ENCODE measurements at regions of chr9 and their contacts with region 1.

Region 1: DNA sequence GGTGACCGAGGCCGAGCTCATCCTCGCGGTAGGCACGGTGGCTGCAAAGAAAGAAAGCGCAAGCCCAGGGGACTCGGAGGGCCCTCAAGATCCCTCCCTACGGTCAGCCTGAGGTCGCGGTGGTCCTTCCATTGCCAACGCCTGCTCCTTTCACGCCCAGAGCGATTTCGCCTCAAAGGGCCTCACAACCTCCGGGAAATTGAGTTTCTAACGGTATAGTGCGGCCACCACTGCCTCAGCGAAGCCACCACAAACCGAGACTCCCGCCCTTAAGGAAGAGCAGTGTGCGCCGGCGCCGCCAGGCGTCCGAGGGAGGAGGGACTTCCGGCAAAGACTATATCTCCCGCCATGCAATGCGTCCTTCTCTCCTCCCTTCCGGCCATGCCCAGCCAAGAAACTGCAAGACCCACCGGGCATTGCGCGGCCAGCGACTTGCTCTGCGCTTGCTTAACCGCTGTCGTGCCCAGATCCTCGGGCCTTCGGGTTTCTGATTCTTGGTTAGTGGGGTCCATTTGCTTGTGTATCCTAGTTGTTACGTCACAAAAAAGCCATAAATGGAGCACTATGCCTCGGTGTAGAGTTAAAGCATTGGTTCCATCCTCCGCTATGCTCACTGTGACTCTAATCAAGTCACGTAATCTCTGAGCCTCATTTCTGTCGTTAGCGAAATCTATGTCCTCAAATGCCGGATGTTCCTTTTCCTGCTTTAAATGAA is at the start of gene HAUS6:
- DNase-seq: peak; percentile 94 to 100 (median 96)

Region 2: DNA sequence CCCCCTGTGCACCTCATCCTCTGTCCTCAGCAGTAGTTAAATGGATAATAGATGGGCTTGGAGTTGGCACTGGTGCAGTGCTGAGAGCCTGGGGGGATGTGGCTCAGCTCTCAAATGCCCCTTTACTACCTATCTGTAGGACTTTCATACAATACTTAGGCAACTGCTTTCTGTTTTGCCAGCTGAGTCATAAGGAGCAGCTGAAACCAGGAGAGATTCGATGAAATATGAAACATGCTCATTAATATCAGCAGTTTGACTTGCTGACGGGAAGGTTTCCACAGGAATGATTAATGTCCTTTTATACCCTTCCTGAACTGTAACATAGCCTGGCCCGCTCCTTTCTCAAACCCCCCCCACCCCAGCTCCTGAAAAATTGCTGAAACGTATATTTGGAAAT is 212.4 kb before region 1 on chr9:
- intact Hi-C with region 1: no loop called
- DNase-seq: no peak

Region 3: GRCh38 chr9:19048966-19049916 is 53.5 kb before region 1 on chr9 and contains the start of gene RRAGA:
- intact Hi-C with region 1: loop called (anchors 2 kb)
- DNase-seq: peak; percentile 87 to 99 (median 93)

Region 4: GRCh38 chr9:19127881-19128500 is 25.2 kb after region 1 on chr9:
- intact Hi-C with region 1: loop called (anchors 2 kb)
- DNase-seq: peak in 2 of 10 donors; percentile 16 to 19

Region 5: DNA sequence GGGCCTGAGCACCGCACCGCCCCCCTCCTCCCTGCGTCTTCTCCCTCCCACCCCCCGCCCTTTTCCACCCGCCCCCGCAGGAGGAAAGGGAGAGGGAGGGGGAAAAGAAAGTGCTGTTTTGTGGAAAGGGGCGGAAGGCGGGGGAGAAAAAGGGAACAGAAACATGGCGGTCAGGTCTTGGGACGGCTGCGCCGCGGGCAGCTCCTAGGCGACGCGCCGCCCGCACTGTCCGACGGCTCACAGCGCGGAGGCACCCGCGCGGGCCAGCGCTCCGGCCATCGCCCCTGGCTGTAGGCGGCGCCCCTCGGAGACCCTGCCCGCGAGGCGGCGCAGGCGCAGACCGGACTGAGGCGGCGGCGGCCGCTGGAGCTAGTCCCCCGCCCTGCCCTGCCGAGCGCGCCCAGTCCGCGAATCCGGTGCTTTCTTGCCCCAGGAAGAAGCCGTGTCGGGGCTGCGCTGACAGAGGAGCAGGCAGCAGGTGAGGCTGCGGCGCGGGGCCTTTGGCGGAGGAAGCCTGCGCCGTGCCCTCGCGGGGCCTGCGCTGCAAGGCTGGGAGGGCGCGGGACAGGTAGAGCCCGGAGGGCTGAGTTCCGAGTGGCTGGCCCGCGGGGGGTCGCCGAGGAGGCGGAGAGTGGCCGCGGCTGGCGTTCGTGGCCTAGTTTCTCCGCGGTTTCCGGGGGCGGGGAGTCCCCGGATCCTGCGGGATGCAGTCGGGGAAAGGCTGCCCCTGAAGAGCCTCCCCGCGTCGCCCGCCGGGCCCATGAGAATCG is 127.8 kb after region 1 on chr9 and contains the start of gene DENND4C:
- intact Hi-C with region 1: loop called (anchors 10 kb)
- DNase-seq: peak; percentile 66 to 97 (median 80)